ENCODE measurements at regions of chr15 and their contacts with region 1.

Region 1: GRCh38 chr15:31905054-31905453 is 125.3 kb upstream of the CHRNA7 start:
- DNase-seq: peak in 1 of 2 donors; percentile 6
- H3K4me3 ChIP-seq: no peak overlapping the region
- H3K27ac ChIP-seq: no peak overlapping the region
- H3K4me1 ChIP-seq: peaks cover 0 to 5% (median 0%) of the 10 kb centered on the region in 4 donors
- H3K27me3 ChIP-seq: no peaks in the 10 kb centered on the region
- CTCF ChIP-seq: no peak
- EP300 ChIP-seq: no peak
- POLR2A ChIP-seq: no peak

Region 2: DNA sequence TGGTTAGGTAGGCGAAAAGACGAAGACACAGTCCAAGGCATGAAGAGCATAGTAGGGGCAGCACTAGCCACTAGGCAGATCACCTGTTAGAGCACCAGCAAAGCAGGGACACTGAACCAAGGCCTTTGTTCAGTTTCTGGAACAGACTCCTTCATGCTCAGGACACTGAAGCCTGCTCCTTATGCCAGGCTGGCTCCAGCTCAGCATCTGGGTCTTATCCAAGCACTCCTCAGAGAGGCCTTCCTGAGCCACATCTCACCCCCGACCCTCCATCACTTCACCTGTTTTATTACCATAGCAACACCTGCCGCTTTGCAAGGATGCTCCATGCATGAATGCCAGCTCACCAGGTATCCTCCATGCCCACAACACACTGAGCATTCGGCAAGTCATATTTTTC is 81.0 kb before region 1 on chr15:
- intact Hi-C with region 1: loop called (anchors 10 kb)
- DNase-seq: no peak
- H3K4me3 ChIP-seq: no peak overlapping the region
- H3K27ac ChIP-seq: no peak overlapping the region
- H3K4me1 ChIP-seq: no peaks in the 10 kb centered on the region
- H3K27me3 ChIP-seq: no peaks in the 10 kb centered on the region
- CTCF ChIP-seq: no peak
- EP300 ChIP-seq: no peak
- POLR2A ChIP-seq: no peak

Measured in stomach (tissue), 19 donors.